PC-9 (cell line): ENCODE measurements at regions of chr4 and their contacts with region 1.

Region 1: DNA sequence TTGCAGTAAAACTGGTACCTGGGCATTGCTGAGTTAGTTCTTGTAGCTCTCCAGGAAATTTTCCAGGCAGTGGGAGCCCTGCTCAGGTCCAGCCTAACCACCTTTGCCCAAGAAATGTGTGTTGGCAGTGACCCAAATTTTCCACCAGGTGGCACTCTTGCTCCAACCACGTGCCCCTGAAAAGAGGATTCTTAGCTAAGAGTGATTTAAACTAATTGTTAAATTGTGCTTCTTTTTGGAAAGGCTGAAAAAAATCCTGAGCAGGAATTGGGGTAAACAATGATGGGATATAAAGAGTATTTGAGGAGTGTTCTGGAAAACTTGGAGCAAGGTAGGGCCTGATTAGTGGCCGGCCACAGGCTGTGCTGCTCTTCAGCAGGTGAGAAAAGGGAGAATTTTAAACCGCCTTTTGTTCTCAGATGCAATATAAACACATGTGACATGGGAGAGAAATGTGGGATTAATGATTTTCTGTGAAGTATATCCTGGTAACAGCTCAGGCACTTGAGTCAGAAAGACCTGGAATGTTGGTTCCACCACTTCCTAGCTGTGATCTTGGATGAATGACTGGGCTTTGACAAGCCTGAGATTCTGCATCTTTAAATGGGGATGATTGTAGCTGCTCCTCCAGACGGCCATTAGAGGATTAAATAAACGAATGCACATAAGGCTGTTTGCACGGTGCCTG is 219.6 kb downstream of the PTTG2 start:
- DNase-seq: peak; percentile 82
- H3K4me3 ChIP-seq: no peak overlapping the region
- H3K27ac ChIP-seq: peak overlapping the region; percentile 86
- H3K4me1 ChIP-seq: peaks cover 30% of the 10 kb centered on the region
- H3K27me3 ChIP-seq: no peaks in the 10 kb centered on the region
- CTCF ChIP-seq: peak; percentile 98

Region 2: DNA sequence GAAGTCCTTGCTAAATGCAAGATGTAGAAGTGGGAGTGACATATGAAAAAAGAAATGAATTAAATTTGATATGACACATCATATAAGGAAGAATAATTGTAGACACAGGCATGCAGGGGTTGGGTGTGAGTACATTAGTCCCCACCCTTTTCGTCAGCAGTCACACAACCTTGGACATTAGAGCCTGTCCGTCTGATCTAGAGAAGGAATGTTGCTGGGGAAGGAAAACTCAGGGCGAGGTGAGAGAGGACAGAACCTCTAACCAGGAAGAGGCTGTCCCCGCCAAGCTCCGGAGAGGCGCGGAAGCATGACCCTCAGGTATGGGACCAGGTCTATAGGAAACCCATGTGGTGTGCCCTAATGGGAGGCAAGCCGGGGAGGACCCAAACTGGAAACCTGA is 595.8 kb before region 1 on chr4:
- CTCF ChIA-PET with region 1: no interaction called
- POLR2A ChIA-PET with region 1: no interaction called
- intact Hi-C with region 1: no loop called
- DNase-seq: no peak
- H3K4me3 ChIP-seq: no peak overlapping the region
- H3K27ac ChIP-seq: no peak overlapping the region
- H3K4me1 ChIP-seq: no peaks in the 10 kb centered on the region
- H3K27me3 ChIP-seq: no peaks in the 10 kb centered on the region
- CTCF ChIP-seq: no peak

Region 3: DNA sequence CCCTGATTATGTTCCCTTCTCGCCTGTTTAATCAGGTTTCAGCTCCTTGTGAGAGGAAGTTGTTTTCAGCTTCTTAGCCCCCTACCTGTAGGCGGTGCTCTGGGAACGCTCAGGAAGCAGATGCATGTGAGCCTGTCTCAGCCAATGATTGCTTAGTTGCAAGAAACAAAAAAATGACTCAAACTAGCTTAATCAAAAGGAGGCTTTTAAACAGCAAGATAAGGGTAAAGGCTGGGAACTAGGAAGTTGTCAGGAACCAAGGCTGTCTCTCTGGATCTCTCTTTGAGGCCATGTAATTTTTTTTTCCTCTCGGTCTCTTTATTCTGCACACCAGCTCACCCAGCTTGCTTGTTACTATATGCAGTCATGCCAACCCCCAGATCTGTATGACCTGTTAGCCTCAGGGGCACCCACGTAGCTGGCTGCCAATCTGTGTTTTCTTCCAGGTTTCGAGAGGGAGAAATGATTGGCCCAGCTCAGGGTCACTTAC is 110.5 kb before region 1 on chr4:
- CTCF ChIA-PET with region 1: interaction called, 4 read pairs
- POLR2A ChIA-PET with region 1: no interaction called
- intact Hi-C with region 1: loop called (anchors 1 kb)
- DNase-seq: peak in 1 of 2 experiments; percentile 39
- H3K4me3 ChIP-seq: no peak overlapping the region
- H3K27ac ChIP-seq: no peak overlapping the region
- H3K4me1 ChIP-seq: peaks cover 17% of the 10 kb centered on the region
- H3K27me3 ChIP-seq: no peaks in the 10 kb centered on the region
- CTCF ChIP-seq: no peak

Region 4: DNA sequence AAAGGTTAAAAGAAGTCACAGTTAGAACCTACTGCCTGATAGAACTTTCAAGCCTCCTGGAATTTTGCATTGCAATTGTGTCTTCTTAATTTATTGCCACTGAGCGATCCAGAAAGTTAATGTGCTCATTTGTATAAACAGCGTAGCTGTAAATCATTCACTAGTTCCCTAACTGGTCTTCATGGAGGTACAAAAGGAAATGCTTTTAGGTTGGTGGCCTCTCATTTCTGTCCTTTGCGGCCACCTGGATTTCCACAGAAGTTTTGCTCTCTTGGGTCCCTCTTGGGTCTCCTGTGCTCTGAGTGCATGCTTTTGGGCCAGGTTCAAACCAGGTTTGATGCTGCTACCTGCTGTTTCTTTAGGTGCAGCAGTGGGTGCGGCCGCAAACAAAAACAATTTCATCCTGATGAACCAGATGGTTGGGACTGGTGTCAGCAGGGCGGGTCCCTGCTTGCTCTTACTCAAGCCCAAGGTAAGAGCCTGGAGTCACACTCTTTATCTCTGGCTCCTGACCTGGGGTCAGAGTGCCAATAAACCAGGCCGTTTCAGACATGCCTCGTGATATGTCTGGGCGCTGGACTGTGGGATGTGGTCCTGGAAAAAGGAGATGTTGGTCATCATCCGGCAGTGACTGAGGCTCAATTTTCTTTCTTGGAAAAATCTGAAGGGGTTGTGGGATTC is 50.4 kb after region 1 on chr4:
- CTCF ChIA-PET with region 1: no interaction called
- POLR2A ChIA-PET with region 1: no interaction called
- intact Hi-C with region 1: loop called (anchors 2 kb)
- DNase-seq: peak; percentile 73 to 95
- H3K4me3 ChIP-seq: peak overlapping the region; percentile 13; the same call in 1 of the 2 replicates
- H3K27ac ChIP-seq: peak overlapping the region; percentile 77
- H3K4me1 ChIP-seq: peaks cover 35% of the 10 kb centered on the region
- H3K27me3 ChIP-seq: no peaks in the 10 kb centered on the region
- CTCF ChIP-seq: no peak

Region 5: GRCh38 chr4:38387348-38387747 is 207.5 kb after region 1 on chr4:
- CTCF ChIA-PET with region 1: no interaction called
- POLR2A ChIA-PET with region 1: no interaction called
- intact Hi-C with region 1: loop called (anchors 10 kb)
- DNase-seq: no peak
- H3K4me3 ChIP-seq: no peak overlapping the region
- H3K27ac ChIP-seq: no peak overlapping the region
- H3K4me1 ChIP-seq: peaks cover 15% of the 10 kb centered on the region
- H3K27me3 ChIP-seq: no peaks in the 10 kb centered on the region
- CTCF ChIP-seq: no peak

Region 6: DNA sequence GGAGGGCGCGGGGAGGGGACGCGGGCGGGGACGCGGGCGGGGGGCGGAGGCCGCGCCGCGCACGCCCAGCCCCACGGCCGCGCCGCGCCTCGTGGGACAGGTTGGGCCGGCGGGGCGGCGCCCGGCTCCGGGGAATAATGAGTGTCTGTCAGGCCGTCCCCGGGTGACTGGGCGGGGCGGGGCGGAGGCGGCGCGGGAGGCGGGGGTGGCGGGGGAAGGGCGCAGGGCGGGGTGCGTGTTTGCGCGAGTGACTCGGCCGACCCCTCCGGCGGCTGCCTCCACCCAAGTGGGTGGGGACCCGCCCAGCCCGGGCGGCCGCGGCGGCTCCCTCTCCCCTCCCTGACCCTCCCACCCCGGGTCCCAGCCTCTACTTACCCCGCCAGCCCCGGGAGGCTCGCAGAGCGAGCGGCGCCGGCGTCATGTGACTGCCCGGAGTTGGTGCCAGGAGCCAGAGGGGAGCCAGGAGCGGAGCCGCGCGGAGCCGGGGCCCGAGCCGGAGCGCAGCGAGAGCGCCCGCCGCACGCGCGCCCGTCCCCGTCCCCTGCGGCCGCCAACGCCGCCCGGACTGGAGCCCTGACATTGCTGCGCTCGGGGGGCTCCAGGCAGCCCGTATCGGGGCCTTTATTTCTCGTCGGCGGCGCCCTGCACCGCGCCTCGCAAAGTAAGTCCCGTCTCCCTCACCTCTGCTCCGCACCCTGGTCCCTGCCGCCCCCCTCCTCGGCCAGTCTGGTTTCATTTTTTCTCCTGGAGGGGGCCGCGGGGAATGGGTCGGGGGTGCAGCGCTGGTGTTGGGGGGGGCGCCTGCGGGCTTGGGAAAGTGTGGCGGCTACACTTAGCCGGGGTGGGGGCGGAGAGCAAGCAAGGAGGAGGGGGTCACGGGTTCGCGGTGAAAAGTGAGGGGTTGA is 484.2 kb after region 1 on chr4 and contains the start of gene KLF3:
- CTCF ChIA-PET with region 1: no interaction called
- POLR2A ChIA-PET with region 1: no interaction called
- intact Hi-C with region 1: no loop called
- DNase-seq: peak; percentile 59 to 92
- H3K4me3 ChIP-seq: peak within 1 kb of the TSS; percentile 72
- H3K27ac ChIP-seq: peak within 1 kb of the TSS; percentile 96
- H3K4me1 ChIP-seq: peaks cover 34% of the 10 kb centered on the region
- H3K27me3 ChIP-seq: no peaks in the 10 kb centered on the region
- CTCF ChIP-seq: no peak
- total RNA-seq, gene KLF3: 33.1 and 37.5 TPM in 2 replicates

Region 7: GRCh38 chr4:38723726-38724474 is 544.1 kb after region 1 on chr4:
- CTCF ChIA-PET with region 1: interaction called, 5 read pairs
- POLR2A ChIA-PET with region 1: no interaction called
- intact Hi-C with region 1: loop called (anchors 1 kb)
- DNase-seq: peak; percentile 74 to 97
- H3K4me3 ChIP-seq: peak overlapping the region; percentile 15; the same call in 1 of the 2 replicates
- H3K27ac ChIP-seq: peak overlapping the region; percentile 97
- H3K4me1 ChIP-seq: peaks cover 54% of the 10 kb centered on the region
- H3K27me3 ChIP-seq: no peaks in the 10 kb centered on the region
- CTCF ChIP-seq: no peak